GM23248 (cell line): ENCODE measurements at regions of chr2 and their contacts with region 1.

Region 1: GRCh38 chr2:132547074-132547687 is 122.8 kb downstream of the LYPD1 start:
- DNase-seq: peak; percentile 89
- H3K4me3 ChIP-seq: no peak overlapping the region
- H3K27ac ChIP-seq: no peak overlapping the region
- H3K4me1 ChIP-seq: 0 out of 2 replicates have a peak, but pooled peaks cover 9% of the 10 kb centered on the region
- H3K27me3 ChIP-seq: no peaks in the 10 kb centered on the region

Region 2: GRCh38 chr2:133166031-133166430 is 618.9 kb after region 1 on chr2:
- in situ Hi-C with region 1: loop called (anchors 10 kb)
- DNase-seq: no peak
- H3K4me3 ChIP-seq: no peak overlapping the region
- H3K27ac ChIP-seq: no peak overlapping the region
- H3K4me1 ChIP-seq: no peaks in the 10 kb centered on the region
- H3K27me3 ChIP-seq: no peaks in the 10 kb centered on the region

Region 3: GRCh38 chr2:133561045-133561852 is 1014.1 kb after region 1 on chr2:
- in situ Hi-C with region 1: loop called (anchors 25 kb)
- DNase-seq: peak; percentile 87
- H3K4me3 ChIP-seq: no peak overlapping the region
- H3K27ac ChIP-seq: no peak overlapping the region
- H3K4me1 ChIP-seq: no peaks in the 10 kb centered on the region; the same call in 1 of the 2 replicates
- H3K27me3 ChIP-seq: no peaks in the 10 kb centered on the region

Region 4: DNA sequence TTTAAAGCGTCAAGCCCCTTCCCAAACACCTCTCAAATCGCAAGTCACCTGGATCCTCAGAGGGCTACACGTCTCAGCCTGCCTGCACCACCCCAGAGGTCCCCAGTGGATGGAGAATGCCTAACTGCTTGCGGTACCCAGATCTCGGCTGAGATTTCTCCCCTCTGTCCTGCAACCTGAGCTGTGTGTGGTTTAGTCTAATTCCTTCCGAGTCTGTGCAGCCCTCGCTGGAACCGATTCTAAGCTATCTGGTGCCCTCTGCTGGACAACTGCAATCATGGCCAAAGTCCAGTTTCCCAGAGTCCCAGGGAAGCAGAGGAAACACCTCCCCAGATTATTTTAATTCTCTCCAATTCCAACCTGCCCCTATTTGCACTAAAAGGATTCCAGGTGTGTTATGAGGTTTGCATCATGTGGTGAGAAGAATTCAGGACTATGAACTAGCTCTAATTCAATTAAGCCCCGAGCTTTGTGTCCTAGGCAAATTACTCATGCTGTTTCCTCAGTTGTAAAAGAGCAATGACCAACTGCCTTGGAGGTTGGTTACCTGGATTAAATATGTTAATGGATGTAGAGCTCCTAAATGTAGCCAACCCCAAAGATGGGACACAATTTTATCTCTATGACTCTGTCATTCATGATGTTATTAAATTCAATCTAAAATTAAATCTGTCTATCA is 1297.2 kb after region 1 on chr2:
- in situ Hi-C with region 1: loop called (anchors 25 kb)
- DNase-seq: peak; percentile 86
- H3K4me3 ChIP-seq: no peak overlapping the region
- H3K27ac ChIP-seq: no peak overlapping the region
- H3K4me1 ChIP-seq: peaks cover 27% of the 10 kb centered on the region
- H3K27me3 ChIP-seq: no peaks in the 10 kb centered on the region